Mammary epithelial cell (primary cell): ENCODE measurements at regions of chr11 and their contacts with region 1.

Region 1: GRCh38 chr11:119474682-119475596 is 52.0 kb upstream of the THY1 start:
- DNase-seq: peak; percentile 42
- H3K4me3 ChIP-seq: no peak overlapping the region
- H3K27ac ChIP-seq: no peak overlapping the region
- H3K4me1 ChIP-seq: peaks cover 8% of the 10 kb centered on the region
- H3K27me3 ChIP-seq: no peaks in the 10 kb centered on the region
- CTCF ChIP-seq: peak; percentile 91 to 98

Region 2: DNA sequence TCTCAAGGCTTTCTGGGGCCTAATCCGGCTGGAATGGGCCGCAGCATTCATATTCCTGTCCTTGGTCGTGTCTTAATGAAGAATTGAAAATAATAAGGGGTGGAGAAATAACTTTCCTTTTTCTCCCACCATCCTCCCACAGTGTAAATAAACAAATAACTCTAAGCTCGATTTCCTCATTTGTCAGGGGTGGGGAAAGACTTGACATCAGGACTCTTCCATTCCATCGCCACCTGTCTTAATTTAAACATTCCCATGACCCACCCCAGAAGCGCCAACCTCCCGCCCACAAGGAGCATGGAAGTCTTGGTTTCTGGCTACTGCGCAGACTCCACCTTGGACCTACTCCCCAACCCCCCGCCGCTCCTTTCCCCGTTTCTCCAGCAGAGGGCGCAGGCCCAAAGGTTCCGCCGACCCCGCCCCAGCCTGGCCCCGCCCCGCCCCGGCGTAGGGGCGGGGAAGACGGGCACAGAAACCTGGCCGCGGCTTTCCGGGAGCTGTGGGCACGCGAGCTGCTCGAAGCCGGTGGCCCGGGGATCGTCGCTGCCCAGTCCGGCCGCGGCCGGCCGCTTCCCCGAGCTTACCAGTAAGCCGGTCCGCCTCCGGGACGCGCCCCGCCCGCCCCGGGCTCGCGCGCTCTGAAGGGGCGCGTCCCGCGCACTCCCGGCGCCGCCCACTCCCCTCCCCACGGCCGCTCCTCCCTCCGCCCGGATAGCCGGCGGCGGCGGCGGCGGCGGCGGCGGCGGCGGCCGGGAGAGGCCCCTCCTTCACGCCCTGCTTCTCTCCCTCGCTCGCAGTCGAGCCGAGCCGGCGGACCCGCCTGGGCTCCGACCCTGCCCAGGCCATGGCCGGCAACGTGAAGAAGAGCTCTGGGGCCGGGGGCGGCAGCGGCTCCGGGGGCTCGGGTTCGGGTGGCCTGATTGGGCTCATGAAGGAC is 269.1 kb before region 1 on chr11 and contains the start of gene CBL:
- CTCF ChIA-PET with region 1: no interaction called
- dilution Hi-C with region 1: no loop called
- in situ Hi-C with region 1: no loop called
- intact Hi-C with region 1: loop called (anchors 2 kb)
- DNase-seq: peak; percentile 85
- H3K4me3 ChIP-seq: peak within 1 kb of the TSS; percentile 76 to 97 (median 96)
- H3K27ac ChIP-seq: peak within 1 kb of the TSS; percentile 60
- H3K4me1 ChIP-seq: peaks cover 11% of the 10 kb centered on the region
- H3K27me3 ChIP-seq: no peaks in the 10 kb centered on the region
- CTCF ChIP-seq: peak; percentile 57 to 91
- total RNA-seq, gene CBL: 19.5 to 33.7 TPM

Region 3: DNA sequence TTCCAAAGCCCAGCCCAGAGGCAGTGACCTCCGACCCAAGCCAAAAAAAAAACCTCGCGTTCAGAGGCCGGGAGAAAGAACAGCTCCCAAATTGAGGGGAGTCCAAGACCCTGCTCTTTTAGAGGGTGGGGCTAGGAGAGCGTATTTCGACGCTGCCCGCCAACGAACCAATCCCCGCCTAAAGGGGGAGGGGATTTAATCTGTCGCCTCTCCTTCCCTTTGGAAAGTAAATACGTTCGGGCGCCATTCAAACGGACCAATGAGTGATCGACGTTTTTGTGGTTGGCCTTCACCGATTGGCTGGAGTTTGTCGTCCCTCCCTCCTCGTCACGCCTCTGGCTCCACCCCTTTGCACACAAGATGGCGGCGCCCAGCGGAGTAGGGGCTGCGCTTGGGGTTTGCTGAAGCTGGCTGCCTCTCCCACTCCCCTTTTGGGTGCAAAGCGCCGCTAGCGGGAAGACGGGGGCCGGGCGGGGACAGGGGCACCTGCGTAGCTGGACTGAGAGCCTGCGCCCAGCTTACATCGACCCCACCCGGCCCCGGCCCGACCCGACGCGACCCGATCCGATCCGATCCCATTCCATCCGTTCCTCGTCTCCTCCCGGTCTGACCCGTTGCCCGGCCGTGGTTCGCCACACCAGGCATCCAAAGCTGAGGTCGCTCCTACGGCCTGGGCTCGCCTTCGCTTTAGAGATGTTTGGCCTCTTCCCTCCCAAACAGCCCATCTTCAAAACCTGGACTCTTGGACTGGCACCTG is 140.6 kb before region 1 on chr11 and contains the start of gene RNF26:
- CTCF ChIA-PET with region 1: interaction called, 23 read pairs
- dilution Hi-C with region 1: no loop called
- in situ Hi-C with region 1: no loop called
- intact Hi-C with region 1: loop called (anchors 1 kb)
- DNase-seq: peak; percentile 95
- H3K4me3 ChIP-seq: peak within 1 kb of the TSS; percentile 63 to 97 (median 93)
- H3K27ac ChIP-seq: peak within 1 kb of the TSS; percentile 88
- H3K4me1 ChIP-seq: peaks cover 22% of the 10 kb centered on the region
- H3K27me3 ChIP-seq: no peaks in the 10 kb centered on the region
- CTCF ChIP-seq: no peak
- total RNA-seq, gene RNF26: 3.7 to 34.4 TPM

Region 4: DNA sequence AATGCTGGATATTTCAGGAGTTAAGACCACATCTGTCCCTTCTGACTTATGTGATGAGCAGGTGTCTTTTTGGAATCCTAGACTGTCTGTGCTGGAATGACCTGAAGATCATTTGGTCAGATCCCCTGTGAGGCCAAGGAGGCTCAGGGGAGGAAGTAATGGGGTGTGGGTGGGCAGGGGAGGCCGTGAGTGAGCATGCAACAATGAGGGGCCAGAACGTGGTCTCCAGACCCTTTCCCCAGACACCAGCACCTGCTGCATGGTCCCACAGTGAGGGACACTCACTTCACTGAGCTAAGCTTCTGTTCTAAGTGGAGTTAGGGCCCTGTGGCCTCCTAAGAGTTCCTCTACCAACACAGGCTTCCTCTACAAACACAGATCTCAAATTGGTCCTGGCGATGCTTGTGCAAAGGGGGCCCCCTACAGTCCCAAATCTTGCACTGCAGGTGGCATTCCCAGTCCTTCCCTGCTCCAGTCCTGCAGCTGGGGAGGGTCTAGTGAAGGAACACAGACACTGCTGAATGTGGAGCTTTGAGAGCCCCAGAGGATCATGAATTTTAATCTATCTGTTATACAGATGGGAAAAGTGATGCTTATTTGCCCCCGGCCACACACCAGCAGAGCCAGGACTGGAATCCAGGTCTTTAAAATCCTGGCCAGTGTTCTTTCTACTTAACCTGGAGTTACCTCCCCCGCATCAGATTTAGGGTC is 100.9 kb before region 1 on chr11:
- CTCF ChIA-PET with region 1: interaction called, 5 read pairs
- dilution Hi-C with region 1: loop called (anchors 10 kb)
- in situ Hi-C with region 1: loop called in 1 of 2 experiments (anchors 5 kb)
- intact Hi-C with region 1: loop called (anchors 1 kb)
- DNase-seq: peak; percentile 54
- H3K4me3 ChIP-seq: no peak overlapping the region
- H3K27ac ChIP-seq: no peak overlapping the region
- H3K4me1 ChIP-seq: peaks cover 42% of the 10 kb centered on the region
- H3K27me3 ChIP-seq: no peaks in the 10 kb centered on the region
- CTCF ChIP-seq: peak; percentile 94 to 96

Region 5: GRCh38 chr11:119417726-119418540 is 57.0 kb before region 1 on chr11:
- CTCF ChIA-PET with region 1: no interaction called
- dilution Hi-C with region 1: no loop called
- in situ Hi-C with region 1: no loop called
- intact Hi-C with region 1: loop called (anchors 5 kb)
- DNase-seq: peak; percentile 81
- H3K4me3 ChIP-seq: peak overlapping the region in 1 of 3 experiments; percentile 4
- H3K27ac ChIP-seq: peak overlapping the region; percentile 48
- H3K4me1 ChIP-seq: peaks cover 36% of the 10 kb centered on the region
- H3K27me3 ChIP-seq: no peaks in the 10 kb centered on the region
- CTCF ChIP-seq: no peak